ENCODE measurements at regions of chr21 and their contacts with region 1.

Region 1: DNA sequence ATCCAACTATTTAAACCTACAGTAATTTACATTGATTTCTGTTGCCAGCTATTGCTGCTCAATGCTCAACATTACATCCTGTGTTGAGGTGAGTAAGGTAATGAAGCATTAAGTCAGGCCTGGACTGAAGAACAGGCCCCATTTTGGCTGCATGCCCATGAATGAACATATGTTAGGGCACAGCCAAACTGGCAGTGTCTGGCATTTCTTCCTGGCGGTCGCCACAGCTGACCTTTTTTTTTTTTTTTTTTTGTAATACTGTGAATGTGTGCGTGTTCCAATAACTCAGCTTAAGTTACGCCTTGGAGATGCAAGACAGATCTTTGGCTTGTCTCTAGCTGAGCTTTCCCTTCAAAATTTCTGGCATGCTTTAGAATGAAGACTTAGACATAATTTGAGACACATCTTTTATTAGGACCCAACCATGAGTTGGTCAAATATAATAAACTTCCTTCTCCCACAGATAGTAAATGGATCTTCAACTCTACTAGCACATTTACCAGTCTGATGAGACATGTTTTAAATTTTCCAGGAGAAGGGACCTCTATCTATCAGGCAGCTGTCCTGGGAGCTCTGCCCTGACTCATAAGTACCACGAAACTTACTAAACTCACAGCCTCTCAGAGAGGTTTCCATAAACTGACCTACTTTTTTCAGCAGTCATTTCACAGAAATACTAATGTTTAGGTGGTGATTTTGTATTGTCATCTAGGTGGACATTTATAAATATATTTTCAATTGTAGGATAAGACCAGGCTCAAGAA is 341.1 kb upstream of the RUNX1 start:
- DNase-seq: no peak
- ATAC-seq: no peak
- H3K4me3 ChIP-seq: no peak overlapping the region
- H3K27ac ChIP-seq: no peak overlapping the region
- H3K4me1 ChIP-seq: no peaks in the 10 kb centered on the region
- H3K27me3 ChIP-seq: no peaks in the 10 kb centered on the region; a peak in 1 of 4 replicates
- CTCF ChIP-seq: no peak
- EP300 ChIP-seq: no peak
- POLR2A ChIP-seq: no peak
- RAD21 ChIP-seq: no peak

Region 2: DNA sequence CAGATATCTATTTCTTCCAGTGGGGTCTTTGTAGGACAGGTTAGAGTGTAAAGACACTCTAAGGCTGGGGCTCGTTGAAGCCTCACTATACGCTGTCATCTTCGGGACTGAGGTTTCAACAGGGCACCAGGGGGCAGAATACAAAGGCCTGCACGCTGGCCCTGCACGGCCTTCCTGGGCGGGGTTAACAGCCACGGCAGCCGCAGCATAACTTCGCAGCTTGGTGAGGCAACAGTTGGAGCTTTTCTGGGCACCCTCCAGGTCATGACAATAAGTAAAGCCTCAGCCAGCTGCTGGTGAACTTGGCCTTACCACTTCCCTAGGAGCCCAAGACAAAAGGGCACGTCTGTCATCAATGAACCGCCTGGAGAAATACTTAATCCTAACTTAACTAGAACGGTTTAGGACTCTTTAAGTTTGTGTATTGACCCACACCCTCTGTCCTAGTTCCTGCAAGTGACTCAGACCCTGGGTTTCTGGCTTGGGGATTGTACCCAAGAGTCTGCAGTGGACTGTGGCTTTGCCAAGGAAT is 338.8 kb before region 1 on chr21:
- CTCF ChIA-PET with region 1: no interaction called
- POLR2A ChIA-PET with region 1: no interaction called
- RAD21 ChIA-PET with region 1: no interaction called
- SMC1A ChIA-PET with region 1: no interaction called
- in situ Hi-C with region 1: no loop called
- intact Hi-C with region 1: loop called (anchors 10 kb)
- DNase-seq: no peak
- ATAC-seq: peak; percentile 34; the same call in 2 of the 3 replicates
- H3K4me3 ChIP-seq: no peak overlapping the region
- H3K27ac ChIP-seq: peak overlapping the region; percentile 23; the same call in 1 of the 2 replicates
- H3K4me1 ChIP-seq: peaks cover 41% of the 10 kb centered on the region
- H3K27me3 ChIP-seq: peaks cover 0 to 1% of the 10 kb centered on the region in 2 experiments; a peak in 1 of 4 replicates
- CTCF ChIP-seq: peak; percentile 16 to 32 (median 31); a peak in 4 of 6 replicates
- EP300 ChIP-seq: no peak
- POLR2A ChIP-seq: no peak
- RAD21 ChIP-seq: peak; percentile 69

Region 3: GRCh38 chr21:36640721-36641244 is 1250.6 kb after region 1 on chr21:
- CTCF ChIA-PET with region 1: no interaction called
- POLR2A ChIA-PET with region 1: no interaction called
- RAD21 ChIA-PET with region 1: no interaction called
- SMC1A ChIA-PET with region 1: no interaction called
- in situ Hi-C with region 1: no loop called
- intact Hi-C with region 1: no loop called
- DNase-seq: no peak
- ATAC-seq: no peak
- H3K4me3 ChIP-seq: no peak overlapping the region
- H3K27ac ChIP-seq: no peak overlapping the region
- H3K4me1 ChIP-seq: no peaks in the 10 kb centered on the region
- H3K27me3 ChIP-seq: no peaks in the 10 kb centered on the region
- CTCF ChIP-seq: no peak
- EP300 ChIP-seq: no peak
- POLR2A ChIP-seq: no peak
- RAD21 ChIP-seq: no peak